Dendritic cell treated with granulocyte-macrophage colony-stimulating factor and Interleukin-4, amounts not matched to agents 40 ng/mL and 50 ng/mL, for 4 days (primary cell): ENCODE measurements at regions of chr1 and their contacts with region 1.

Region 1: DNA sequence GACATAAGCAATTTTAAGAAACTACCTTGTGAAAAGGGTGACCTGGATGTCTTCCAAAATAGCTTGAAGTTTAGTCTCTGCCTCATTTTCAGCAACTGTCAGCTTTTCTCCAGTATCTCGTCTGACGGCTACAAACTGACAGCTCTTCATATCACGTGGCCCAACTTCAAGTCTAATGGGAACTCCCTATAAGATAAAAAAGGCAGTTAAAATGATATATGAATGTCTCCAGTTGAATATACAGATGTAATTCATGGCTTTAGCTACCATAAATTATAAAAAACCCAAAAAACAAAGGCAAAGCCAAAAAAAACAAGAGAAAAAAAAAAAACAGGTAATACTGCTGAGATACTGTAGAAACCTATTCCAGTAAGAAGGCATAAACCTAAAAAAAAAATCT is 44.9 kb upstream of the SLC30A10 start:
- H3K4me3 Mint-ChIP-seq: no peak overlapping the region
- H3K27ac Mint-ChIP-seq: no peak overlapping the region
- H3K4me1 Mint-ChIP-seq: no peaks in the 10 kb centered on the region
- H3K27me3 Mint-ChIP-seq: no peaks in the 10 kb centered on the region

Region 2: DNA sequence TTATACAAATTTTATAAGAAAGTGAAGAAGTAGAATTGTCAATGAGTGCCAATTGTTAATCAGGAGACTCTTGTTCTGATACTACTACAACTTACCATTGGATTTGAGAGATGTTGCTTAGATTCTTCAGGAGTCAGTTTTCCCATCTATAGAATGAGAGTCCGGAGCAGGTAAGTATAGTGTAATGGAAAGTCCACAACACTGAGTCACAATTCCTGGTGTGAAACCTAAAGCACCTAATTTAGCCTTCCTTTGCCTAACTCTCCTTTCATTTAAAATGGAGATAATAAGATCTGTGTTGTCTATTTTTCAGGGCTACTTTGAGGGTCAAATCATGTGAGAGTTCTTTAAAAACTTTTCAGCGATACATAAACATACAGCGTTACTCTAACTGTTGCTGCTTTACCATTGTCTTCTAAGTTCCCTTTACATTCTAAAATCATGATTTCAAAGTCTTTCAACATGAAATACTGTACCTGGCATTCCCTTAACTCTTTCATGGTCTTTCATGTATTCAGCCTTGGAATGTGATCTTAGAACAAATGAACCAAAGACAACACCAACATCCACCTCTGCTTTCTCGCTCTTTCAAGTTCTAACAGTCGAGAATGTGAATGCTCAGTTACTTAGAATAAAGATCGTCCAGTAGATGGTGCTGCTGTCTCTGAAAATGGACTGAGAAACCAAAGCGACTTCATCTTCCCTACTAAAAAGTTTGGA is 135.8 kb before region 1 on chr1:
- intact Hi-C with region 1: loop called (anchors 5 kb)
- H3K4me3 Mint-ChIP-seq: no peak overlapping the region
- H3K27ac Mint-ChIP-seq: no peak overlapping the region
- H3K4me1 Mint-ChIP-seq: no peaks in the 10 kb centered on the region
- H3K27me3 Mint-ChIP-seq: no peaks in the 10 kb centered on the region

Region 3: DNA sequence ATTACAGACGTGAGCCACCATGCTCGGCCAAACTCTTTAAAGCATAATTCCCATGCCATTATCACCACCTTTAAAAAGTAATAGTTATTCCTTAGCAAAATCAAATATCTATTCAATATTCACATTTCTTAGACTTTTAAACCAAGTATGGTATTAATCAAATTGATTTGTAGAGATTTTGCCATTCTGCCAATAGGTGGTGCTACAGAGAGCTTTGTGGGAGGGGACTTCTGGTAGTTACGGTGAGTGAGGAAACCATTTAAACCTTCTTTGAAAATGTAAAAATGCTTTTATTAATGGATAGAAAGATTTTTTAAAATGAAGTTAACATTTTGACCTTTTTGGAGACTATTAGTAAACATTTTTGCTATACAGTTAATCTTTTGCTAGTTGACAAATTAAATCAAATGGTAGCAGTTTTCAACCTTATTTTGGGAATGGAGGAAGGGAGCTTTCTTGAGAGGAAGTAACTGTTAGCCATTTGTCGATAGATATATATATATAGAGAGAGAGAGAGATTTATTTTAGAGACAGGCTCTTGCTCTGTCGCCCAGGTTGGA is 140.0 kb after region 1 on chr1:
- intact Hi-C with region 1: loop called (anchors 5 kb)
- H3K4me3 Mint-ChIP-seq: no peak overlapping the region
- H3K27ac Mint-ChIP-seq: no peak overlapping the region
- H3K4me1 Mint-ChIP-seq: no peaks in the 10 kb centered on the region
- H3K27me3 Mint-ChIP-seq: no peaks in the 10 kb centered on the region

Region 4: GRCh38 chr1:221272940-221273339 is 1299.7 kb after region 1 on chr1:
- intact Hi-C with region 1: no loop called
- H3K4me3 Mint-ChIP-seq: no peak overlapping the region
- H3K27ac Mint-ChIP-seq: no peak overlapping the region
- H3K4me1 Mint-ChIP-seq: no peaks in the 10 kb centered on the region
- H3K27me3 Mint-ChIP-seq: no peaks in the 10 kb centered on the region